ENCODE measurements at regions of chr11 and their contacts with region 1.

Region 1: DNA sequence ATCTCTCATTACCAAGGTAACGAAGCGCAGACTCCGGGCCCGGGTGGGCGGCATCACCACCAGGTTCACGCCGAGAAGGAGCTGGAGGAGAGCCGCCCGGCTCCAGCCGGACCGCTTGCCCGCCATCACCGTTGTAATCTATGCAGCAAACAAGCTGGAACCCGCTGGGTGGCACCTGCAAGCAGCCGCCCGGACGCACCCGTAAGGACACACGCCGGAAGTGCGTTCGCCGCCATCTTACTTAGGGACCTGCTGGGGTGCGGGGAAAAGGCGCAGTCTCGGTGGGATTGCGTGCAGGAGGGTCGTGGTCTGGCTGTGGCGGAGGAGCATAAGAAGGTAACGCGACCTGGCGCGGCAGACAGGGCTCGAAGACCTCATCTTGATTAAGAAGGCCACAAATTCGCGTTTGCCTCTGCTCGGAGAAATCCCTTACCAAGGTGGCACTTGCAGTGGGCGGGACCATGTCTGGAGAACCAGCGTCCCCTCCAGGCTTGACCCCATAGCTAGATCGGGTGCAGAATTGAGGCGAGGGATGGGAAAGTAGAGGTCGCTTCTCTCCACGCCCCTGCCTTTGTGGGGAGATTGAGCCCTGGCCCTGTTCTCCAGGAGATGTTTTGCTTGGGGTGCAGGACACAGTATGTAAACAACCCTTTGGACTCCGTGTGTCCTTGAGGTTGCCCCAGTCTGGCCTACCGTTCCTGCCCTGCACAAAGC is at the start of gene ACP2:
- DNase-seq: peak; percentile 85
- ATAC-seq: peak; percentile 89
- H3K4me3 ChIP-seq: peak within 1 kb of the TSS; percentile 69 to 92 (median 85)
- H3K27ac ChIP-seq: peak within 1 kb of the TSS; percentile 94
- H3K4me1 ChIP-seq: peaks cover 69% of the 10 kb centered on the region
- H3K27me3 ChIP-seq: no peaks in the 10 kb centered on the region; a peak in 1 of 5 replicates
- CTCF ChIP-seq: peak; percentile 57
- EP300 ChIP-seq: peak; percentile 58 to 59
- POLR2A ChIP-seq: peak; percentile 89 to 90
- RAD21 ChIP-seq: peak; percentile 72
- total RNA-seq, gene ACP2: 7.8 and 20.2 TPM in 2 replicates

Region 2: GRCh38 chr11:47130543-47130942 is 118.3 kb before region 1 on chr11:
- CTCF ChIA-PET with region 1: no interaction called
- POLR2A ChIA-PET with region 1: no interaction called
- in situ Hi-C with region 1: no loop called
- intact Hi-C with region 1: no loop called
- DNase-seq: no peak
- ATAC-seq: no peak
- H3K4me3 ChIP-seq: no peak overlapping the region
- H3K27ac ChIP-seq: no peak overlapping the region
- H3K4me1 ChIP-seq: no peaks in the 10 kb centered on the region
- H3K27me3 ChIP-seq: no peaks in the 10 kb centered on the region
- CTCF ChIP-seq: no peak
- EP300 ChIP-seq: no peak
- POLR2A ChIP-seq: no peak
- RAD21 ChIP-seq: no peak

Region 3: DNA sequence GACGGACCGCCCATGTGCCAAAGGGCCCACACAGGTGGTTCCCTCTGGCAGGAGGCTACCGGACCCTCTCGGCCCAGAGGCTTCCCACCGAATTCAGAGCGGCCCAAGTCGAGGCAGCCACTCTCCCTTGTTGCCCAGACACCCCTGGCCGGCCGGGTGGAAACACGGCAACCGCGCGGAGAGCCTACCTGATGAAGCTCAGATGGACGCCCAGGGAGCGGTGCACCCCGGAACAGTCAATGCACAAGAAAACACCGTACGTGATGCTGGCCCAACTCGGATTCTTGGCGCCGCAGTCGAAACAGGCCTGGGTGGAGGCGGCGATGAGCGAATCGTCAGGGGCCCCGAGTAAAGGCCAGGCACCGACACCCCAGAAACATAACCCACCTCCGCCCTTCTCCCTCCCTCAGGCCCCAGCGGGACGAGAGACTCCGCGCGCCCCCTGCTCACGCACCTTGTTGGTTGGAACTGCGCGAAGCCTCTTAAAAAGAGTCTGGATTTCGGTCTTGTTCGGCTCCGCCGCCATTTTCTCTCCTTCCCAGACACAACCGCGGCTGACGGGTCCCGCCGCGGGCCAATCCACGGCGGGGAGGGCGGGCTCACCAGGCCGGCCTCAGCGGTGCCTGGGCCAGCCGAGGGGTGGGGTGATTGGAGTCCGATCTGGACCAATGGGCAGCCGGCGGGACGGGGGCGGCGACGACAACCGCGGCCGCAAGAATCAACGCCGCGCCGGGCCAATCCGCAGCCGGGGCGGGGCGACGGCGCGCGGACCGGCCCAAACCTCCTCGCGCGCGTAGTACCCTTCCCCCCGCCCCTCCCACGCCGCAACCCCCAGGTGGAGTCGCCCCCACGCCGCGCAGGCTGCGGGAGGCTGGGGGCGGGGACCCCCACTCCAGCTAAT is 72.2 kb before region 1 on chr11 and contains the start of gene ARFGAP2:
- CTCF ChIA-PET with region 1: no interaction called
- POLR2A ChIA-PET with region 1: interaction called, 36 read pairs
- in situ Hi-C with region 1: loop called (anchors 5 kb)
- intact Hi-C with region 1: no loop called
- DNase-seq: peak; percentile 84
- ATAC-seq: peak; percentile 90
- H3K4me3 ChIP-seq: peak within 1 kb of the TSS; percentile 91 to 98 (median 93)
- H3K27ac ChIP-seq: peak within 1 kb of the TSS; percentile 84
- H3K4me1 ChIP-seq: peaks cover 62% of the 10 kb centered on the region
- H3K27me3 ChIP-seq: no peaks in the 10 kb centered on the region; a peak in 1 of 5 replicates
- CTCF ChIP-seq: no peak
- EP300 ChIP-seq: no peak
- POLR2A ChIP-seq: peak in 1 of 2 experiments; percentile 54; a peak in 1 of 4 replicates
- RAD21 ChIP-seq: no peak
- total RNA-seq, gene ARFGAP2: 67.9 and 75.3 TPM in 2 replicates

Region 4: DNA sequence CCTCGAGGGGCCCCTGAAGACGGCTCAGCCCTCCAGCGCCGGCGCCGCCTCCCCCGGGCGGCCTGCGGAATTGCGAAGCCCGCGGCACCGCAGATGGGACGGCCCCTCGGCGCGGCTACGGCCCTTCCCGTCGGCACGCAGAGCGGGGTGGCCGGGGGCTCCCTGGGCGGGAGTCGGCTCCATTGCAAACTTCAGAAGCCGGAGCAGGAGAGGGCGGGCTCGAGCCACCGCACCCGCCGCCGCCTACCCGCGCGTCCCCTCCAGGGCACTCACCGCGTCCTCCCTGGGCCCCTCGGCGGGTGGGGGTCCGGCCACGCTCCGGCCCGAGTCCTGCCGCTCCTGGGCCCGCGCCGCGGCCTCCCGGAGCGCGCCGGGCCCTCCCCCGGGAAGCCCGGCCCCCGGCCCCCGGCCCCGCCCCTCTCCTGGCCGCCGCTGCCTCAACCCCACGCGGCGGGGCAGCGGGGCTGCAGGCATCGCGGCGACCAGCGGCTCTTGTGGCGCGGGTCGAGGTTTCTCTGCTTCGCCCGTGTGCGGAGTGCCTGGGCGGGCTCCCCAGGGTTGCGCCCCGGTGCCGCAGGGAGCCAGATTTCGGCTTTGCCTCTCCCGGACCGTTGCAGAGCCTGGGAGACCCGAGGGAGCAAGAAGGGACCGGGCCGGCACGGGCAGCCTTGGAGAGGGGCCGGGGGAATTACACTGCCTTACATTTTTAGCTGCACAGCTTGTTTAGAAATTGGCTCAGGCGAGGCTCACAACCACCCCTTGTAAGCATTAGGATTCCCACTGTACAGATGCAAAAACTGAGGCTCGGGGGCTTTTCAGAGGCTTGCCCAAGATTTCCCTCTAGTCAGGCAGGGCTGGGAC is 62.5 kb before region 1 on chr11 and contains the start of gene PACSIN3:
- CTCF ChIA-PET with region 1: no interaction called
- POLR2A ChIA-PET with region 1: interaction called, 54 read pairs
- in situ Hi-C with region 1: no loop called
- intact Hi-C with region 1: loop called (anchors 2 kb)
- DNase-seq: peak; percentile 43
- ATAC-seq: peak; percentile 20
- H3K4me3 ChIP-seq: peak within 1 kb of the TSS; percentile 70 to 86 (median 77)
- H3K27ac ChIP-seq: peak within 1 kb of the TSS; percentile 98
- H3K4me1 ChIP-seq: peaks cover 56% of the 10 kb centered on the region
- H3K27me3 ChIP-seq: no peaks in the 10 kb centered on the region
- CTCF ChIP-seq: no peak
- EP300 ChIP-seq: no peak
- POLR2A ChIP-seq: peak in 1 of 2 experiments; percentile 63; a peak in 2 of 4 replicates
- RAD21 ChIP-seq: no peak
- total RNA-seq, gene PACSIN3: 86.4 and 93.3 TPM in 2 replicates

Region 5: DNA sequence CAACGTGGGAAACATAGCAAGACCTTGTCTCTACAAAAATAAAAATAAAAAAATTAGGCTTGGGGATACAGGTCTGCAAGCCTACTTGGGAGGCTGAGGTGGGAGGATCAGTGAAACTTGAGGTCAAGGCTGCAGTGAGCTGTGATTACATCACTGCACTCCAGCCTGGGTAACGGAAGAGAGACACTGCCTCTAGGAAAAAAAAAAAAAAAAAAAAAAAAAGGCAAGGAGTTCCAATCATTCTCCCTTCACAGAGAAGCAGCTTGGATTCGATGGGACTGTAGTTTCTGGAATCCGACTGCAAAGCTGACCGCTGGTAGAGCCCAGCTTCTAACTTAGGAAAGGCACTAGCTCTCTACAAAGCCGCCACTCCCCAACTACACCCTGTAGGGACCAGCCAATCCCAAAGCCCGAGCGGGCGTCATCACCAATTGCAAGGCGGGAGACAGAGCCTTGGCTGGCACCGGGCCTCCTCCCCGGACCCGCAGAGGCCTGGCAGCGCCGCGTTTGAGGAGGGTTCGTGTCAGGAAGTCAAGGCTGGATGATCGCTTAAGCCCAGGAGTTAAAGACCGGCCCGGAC is 34.7 kb before region 1 on chr11:
- CTCF ChIA-PET with region 1: no interaction called
- POLR2A ChIA-PET with region 1: interaction called, 58 read pairs
- in situ Hi-C with region 1: no loop called
- intact Hi-C with region 1: no loop called
- DNase-seq: peak; percentile 86
- ATAC-seq: peak; percentile 90
- H3K4me3 ChIP-seq: peak overlapping the region; percentile 70 to 86 (median 79)
- H3K27ac ChIP-seq: peak overlapping the region; percentile 73
- H3K4me1 ChIP-seq: peaks cover 57% of the 10 kb centered on the region
- H3K27me3 ChIP-seq: no peaks in the 10 kb centered on the region; a peak in 1 of 5 replicates
- CTCF ChIP-seq: no peak
- EP300 ChIP-seq: no peak
- POLR2A ChIP-seq: peak; percentile 21 to 58; a peak in 3 of 4 replicates
- RAD21 ChIP-seq: no peak

Region 6: DNA sequence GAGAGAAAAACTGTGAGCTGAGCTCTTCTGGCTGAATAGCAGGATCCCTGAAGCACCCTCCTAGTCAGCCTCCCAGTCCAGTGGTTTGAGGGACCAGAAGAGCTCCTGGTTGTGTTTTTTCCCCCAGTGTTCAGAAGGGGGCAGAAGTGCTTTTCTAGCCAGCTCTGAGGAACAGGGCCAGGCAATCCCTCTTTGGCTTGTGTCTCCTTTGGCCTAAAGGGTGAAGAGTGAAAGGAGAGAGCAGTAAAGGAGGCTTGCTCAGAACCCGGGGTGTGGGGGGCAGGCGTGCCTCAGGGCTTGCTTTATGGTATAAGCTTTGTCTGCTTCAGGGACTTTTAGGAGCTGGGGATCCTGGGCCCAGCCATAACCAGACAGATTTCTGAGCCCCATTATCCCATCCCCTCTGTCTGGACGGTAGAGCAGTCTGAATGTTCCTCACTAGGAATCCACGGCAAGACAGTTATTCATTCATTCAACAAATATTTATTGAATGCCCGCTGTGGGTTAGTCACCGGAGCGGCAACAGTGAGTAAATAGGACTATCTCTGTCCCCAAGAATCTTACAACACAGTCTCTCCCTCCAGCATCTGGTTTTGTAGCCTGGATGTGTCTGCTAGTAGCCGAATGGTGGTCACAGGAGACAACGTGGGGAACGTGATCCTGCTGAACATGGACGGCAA is 14.7 kb before region 1 on chr11:
- CTCF ChIA-PET with region 1: no interaction called
- POLR2A ChIA-PET with region 1: interaction called, 17 read pairs
- in situ Hi-C with region 1: no loop called
- intact Hi-C with region 1: no loop called
- DNase-seq: peak; percentile 41
- ATAC-seq: peak; percentile 69
- H3K4me3 ChIP-seq: no peak overlapping the region
- H3K27ac ChIP-seq: no peak overlapping the region
- H3K4me1 ChIP-seq: peaks cover 16% of the 10 kb centered on the region
- H3K27me3 ChIP-seq: no peaks in the 10 kb centered on the region
- CTCF ChIP-seq: peak; percentile 59
- EP300 ChIP-seq: no peak
- POLR2A ChIP-seq: no peak; a peak in 1 of 4 replicates
- RAD21 ChIP-seq: peak; percentile 40; the same call in 1 of the 2 replicates

Region 7: GRCh38 chr11:47269002-47269828 is 20.4 kb after region 1 on chr11:
- CTCF ChIA-PET with region 1: no interaction called
- POLR2A ChIA-PET with region 1: interaction called, 19 read pairs
- in situ Hi-C with region 1: no loop called
- intact Hi-C with region 1: no loop called
- DNase-seq: peak; percentile 94
- ATAC-seq: peak; percentile 76
- H3K4me3 ChIP-seq: peak overlapping the region; percentile 70 to 92 (median 82)
- H3K27ac ChIP-seq: peak overlapping the region; percentile 88
- H3K4me1 ChIP-seq: peaks cover 57% of the 10 kb centered on the region
- H3K27me3 ChIP-seq: no peaks in the 10 kb centered on the region
- CTCF ChIP-seq: peak; percentile 15
- EP300 ChIP-seq: peak in 1 of 2 experiments; percentile 19; a peak in 1 of 4 replicates
- POLR2A ChIP-seq: peak in 1 of 2 experiments; percentile 17; a peak in 1 of 4 replicates
- RAD21 ChIP-seq: no peak